A673 (cell line): ENCODE measurements at regions of chr1 and their contacts with region 1.

Region 1: GRCh38 chr1:165807613-165808012 is 19.8 kb upstream of the UCK2 start:
- DNase-seq: no peak
- H3K4me3 ChIP-seq: no peak overlapping the region
- H3K27ac ChIP-seq: no peak overlapping the region
- H3K4me1 ChIP-seq: no peaks in the 10 kb centered on the region
- H3K27me3 ChIP-seq: no peaks in the 10 kb centered on the region
- CTCF ChIP-seq: no peak

Region 2: GRCh38 chr1:165862448-165862847 is 54.8 kb after region 1 on chr1:
- CTCF ChIA-PET with region 1: no interaction called
- POLR2A ChIA-PET with region 1: no interaction called
- intact Hi-C with region 1: loop called (anchors 10 kb)
- DNase-seq: no peak
- H3K4me3 ChIP-seq: no peak overlapping the region
- H3K27ac ChIP-seq: no peak overlapping the region
- H3K4me1 ChIP-seq: peaks cover 17% of the 10 kb centered on the region
- H3K27me3 ChIP-seq: no peaks in the 10 kb centered on the region
- CTCF ChIP-seq: no peak

Region 3: GRCh38 chr1:166153525-166154314 is 346.1 kb after region 1 on chr1:
- CTCF ChIA-PET with region 1: no interaction called
- POLR2A ChIA-PET with region 1: no interaction called
- intact Hi-C with region 1: no loop called
- DNase-seq: no peak
- H3K4me3 ChIP-seq: no peak overlapping the region
- H3K27ac ChIP-seq: no peak overlapping the region
- H3K4me1 ChIP-seq: no peaks in the 10 kb centered on the region
- H3K27me3 ChIP-seq: no peaks in the 10 kb centered on the region
- CTCF ChIP-seq: no peak